Testis (tissue), 5 donors: ENCODE measurements at regions of chr2 and their contacts with region 1.

Region 1: GRCh38 chr2:172465417-172466334 is 38.3 kb downstream of the ITGA6 start:
- DNase-seq: peak; percentile 87
- H3K4me3 ChIP-seq: no peak overlapping the region
- H3K27ac ChIP-seq: peak overlapping the region in 1 of 2 donors; percentile 1
- H3K4me1 ChIP-seq: peaks cover 17% of the 10 kb centered on the region
- H3K27me3 ChIP-seq: no peaks in the 10 kb centered on the region
- CTCF ChIP-seq: peak; percentile 79 to 88 (median 82)
- POLR2A ChIP-seq: no peak

Region 2: DNA sequence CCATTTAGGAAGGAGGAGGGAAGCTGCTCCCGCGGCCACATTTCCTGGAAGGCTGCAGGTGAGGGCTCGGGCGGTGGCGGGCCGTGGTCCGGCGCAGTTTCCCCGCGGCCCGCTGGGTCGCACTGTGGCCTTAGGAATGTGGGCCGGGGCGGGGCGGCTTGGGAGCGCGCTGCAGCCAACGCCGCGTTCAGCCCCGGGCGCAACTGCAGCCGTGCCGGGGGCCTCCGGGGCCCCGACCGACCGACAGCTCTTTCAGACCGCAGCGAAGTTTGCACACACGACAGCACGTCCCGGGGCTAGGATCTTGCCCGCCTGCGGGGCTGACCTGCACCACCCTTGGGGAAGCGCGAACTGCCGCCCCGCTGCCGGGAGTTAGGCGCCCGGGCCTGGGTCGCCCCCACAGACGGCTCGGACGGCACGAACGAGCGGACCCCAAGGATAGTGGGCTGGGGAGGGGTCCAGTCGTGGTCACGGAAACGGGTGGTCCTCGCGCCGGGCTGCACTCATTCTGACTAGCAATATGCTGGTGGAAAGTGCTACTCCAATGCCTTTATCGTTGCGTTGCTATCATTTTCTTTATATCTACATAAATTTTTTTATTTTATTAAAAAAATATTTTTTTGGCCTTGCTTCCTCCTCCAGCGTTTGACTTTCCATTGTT is 293.0 kb before region 1 on chr2:
- intact Hi-C with region 1: loop called (anchors 5 kb)
- DNase-seq: peak; percentile 80
- H3K4me3 ChIP-seq: peak overlapping the region; percentile 57 to 59
- H3K27ac ChIP-seq: peak overlapping the region in 1 of 2 donors; percentile 25
- H3K4me1 ChIP-seq: no peaks in the 10 kb centered on the region
- H3K27me3 ChIP-seq: no peaks in the 10 kb centered on the region
- CTCF ChIP-seq: peak; percentile 70 to 76 (median 70)
- POLR2A ChIP-seq: no peak

Region 3: DNA sequence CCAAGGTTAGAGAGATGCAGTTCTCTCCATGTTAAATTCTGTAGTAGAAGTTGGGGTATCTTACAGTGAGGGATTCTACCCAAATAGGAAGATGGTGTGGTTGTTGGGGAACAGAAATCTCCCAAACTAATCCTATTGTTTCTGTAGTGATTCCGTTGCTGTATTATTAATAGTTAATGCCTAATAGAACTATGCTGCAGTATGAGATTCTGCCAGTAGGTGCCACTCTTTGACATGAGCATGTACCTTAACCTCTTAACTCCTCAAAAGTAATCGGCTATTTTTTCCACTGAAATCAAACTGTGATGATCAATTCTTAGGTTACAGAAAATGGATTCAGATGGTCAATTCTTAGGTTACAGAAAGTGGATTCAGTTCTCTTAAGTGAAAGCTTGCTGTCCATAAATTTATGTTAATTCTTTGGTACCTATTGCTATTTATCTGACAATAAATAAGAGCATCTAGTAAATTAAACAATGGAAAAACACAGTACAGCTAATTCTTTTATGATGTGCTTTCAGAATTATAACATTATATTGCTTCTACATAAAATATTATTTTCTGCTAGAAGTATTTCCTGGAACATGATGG is 265.1 kb before region 1 on chr2:
- intact Hi-C with region 1: loop called (anchors 10 kb)
- DNase-seq: peak; percentile 72
- H3K4me3 ChIP-seq: no peak overlapping the region
- H3K27ac ChIP-seq: no peak overlapping the region
- H3K4me1 ChIP-seq: no peaks in the 10 kb centered on the region
- H3K27me3 ChIP-seq: no peaks in the 10 kb centered on the region
- CTCF ChIP-seq: peak; percentile 40 to 59 (median 45)
- POLR2A ChIP-seq: no peak

Region 4: DNA sequence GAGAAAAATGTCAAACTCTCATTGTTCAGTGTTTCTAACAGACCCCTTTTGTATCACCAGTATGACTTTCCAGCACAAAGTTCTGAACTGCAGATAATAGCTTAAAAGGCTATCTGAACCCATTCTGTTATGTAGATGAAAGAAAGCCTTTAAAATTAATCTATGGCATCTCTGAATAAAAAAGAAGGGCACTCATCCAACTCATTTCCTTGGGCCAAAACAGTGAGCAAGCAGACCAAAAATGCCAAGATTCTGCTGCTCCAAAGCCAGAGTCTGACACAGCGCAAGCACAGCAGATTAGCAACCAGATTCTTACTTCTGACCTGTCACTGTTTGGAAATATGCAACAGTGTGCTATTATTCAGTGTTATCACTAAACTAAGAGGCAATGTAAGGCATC is 60.9 kb before region 1 on chr2:
- intact Hi-C with region 1: no loop called
- DNase-seq: peak; percentile 65
- H3K4me3 ChIP-seq: no peak overlapping the region
- H3K27ac ChIP-seq: no peak overlapping the region
- H3K4me1 ChIP-seq: peaks cover 24% of the 10 kb centered on the region
- H3K27me3 ChIP-seq: no peaks in the 10 kb centered on the region
- CTCF ChIP-seq: no peak
- POLR2A ChIP-seq: no peak

Region 5: DNA sequence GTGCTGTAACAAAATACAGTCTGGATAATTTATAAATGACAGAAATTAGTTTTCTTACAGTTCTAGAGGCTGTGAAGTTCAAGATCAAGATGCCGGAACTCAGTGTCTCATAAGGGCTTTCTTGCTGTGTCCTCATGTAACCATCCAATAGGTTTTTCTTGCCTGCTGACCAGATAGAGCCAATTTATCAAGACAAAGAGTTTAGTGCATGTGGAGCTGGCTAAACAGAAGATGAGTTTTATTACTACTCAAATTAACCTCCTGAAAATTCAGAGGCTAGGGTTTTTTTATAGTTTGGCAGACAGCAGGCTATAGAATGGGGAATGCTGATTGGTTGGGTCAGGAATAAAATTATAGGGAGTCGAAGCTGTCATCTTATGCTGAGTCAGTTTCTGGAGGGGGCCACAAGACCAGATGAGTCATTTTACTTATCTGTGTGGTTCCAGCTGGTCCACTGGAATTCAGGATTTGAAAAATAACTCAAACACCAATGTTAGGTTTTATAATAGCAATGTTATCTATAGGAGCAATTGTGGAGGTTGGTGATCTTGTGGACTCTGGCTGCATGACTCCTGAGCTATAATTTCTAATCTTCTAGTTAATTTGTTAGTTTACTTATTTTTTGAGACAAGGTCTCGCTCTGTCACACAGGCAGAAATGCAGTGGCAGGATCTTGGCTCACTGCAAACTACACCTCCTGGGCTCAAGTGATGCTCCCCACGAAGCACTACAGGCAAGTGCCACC is 87.0 kb after region 1 on chr2:
- intact Hi-C with region 1: no loop called
- DNase-seq: no peak
- H3K4me3 ChIP-seq: no peak overlapping the region
- H3K27ac ChIP-seq: no peak overlapping the region
- H3K4me1 ChIP-seq: peaks cover 5% of the 10 kb centered on the region
- H3K27me3 ChIP-seq: no peaks in the 10 kb centered on the region
- CTCF ChIP-seq: no peak
- POLR2A ChIP-seq: no peak

Region 6: GRCh38 chr2:172623249-172623965 is 157.7 kb after region 1 on chr2:
- intact Hi-C with region 1: no loop called
- DNase-seq: no peak
- H3K4me3 ChIP-seq: no peak overlapping the region
- H3K27ac ChIP-seq: no peak overlapping the region
- H3K4me1 ChIP-seq: no peaks in the 10 kb centered on the region
- H3K27me3 ChIP-seq: no peaks in the 10 kb centered on the region
- CTCF ChIP-seq: no peak
- POLR2A ChIP-seq: no peak